AG04449 (cell line): ENCODE measurements at regions of chr17 and their contacts with region 1.

Region 1: GRCh38 chr17:82781894-82782274 is 30.0 kb downstream of the TBCD start:
- DNase-seq: no peak
- H3K4me3 ChIP-seq: no peak overlapping the region
- CTCF ChIP-seq: peak; percentile 99

Region 2: DNA sequence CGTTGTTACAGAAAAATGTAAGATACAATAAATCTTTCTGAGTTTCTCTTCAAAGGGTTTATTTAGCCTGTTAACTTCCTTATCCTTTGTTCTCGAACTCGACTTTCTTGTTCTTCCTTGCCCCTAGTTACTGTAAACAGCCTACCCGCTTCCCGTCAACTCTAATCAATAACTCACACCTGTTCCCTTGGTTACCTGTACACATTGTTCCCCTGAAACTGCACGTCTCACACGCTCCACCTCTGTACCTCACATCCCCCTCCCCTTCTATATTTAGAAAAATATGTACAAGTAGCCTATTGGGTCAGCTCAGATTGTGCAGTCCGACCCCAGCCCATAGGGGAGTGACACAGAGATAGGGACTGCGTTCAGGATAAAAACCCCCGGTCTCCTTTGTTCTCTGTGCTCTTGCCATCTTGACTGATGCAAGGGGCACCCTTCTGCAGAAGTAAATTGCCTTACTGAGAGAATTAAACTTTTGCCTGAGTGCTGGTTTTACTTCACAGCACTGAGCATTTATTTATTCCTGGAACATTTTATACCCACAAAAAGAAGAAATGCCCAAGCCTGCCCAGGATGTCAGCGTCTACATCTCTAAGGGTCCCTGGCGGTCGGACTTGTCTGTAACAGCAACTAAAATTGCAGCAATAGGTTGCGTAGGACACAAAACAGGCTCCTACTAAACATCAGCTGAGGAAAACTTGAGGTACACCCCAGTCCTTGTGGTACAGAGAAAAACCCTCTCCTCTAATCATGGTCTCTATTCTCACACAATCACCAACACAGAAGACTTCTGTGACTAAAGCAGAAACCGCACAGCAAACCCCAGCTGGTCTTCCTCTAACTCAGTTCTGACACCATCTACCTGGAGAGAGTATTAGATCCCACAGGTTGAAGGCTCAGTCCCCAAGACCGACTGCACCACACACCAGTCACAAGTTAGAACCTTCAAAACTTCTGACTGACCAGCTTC is 145.0 kb before region 1 on chr17:
- CTCF ChIA-PET with region 1: no interaction called
- POLR2A ChIA-PET with region 1: no interaction called
- DNase-seq: no peak
- H3K4me3 ChIP-seq: no peak overlapping the region
- CTCF ChIP-seq: no peak

Region 3: DNA sequence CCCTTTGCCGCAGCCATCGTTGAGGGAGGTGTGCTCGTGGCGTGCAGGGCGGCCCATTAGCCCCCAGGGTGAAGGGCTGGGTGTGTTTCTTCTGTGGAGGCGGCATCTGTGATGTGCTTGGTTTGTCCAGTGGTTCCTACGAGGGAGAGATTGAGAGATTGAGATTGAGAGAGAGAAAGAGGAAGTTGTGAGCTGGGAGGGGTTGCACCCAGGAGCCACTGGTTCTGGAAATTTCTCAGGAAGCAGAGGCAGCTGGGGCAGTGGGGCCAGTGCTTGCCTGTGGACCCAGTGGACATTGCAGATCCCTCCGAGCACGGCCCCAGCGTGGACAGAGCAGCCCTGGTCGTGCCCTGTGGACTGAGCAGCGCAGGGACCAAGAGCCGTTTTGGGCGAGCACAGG is 129.9 kb after region 1 on chr17:
- CTCF ChIA-PET with region 1: interaction called, 52 read pairs
- POLR2A ChIA-PET with region 1: no interaction called
- DNase-seq: no peak
- H3K4me3 ChIP-seq: no peak overlapping the region
- CTCF ChIP-seq: no peak

Region 4: GRCh38 chr17:83073444-83074063 is 291.7 kb after region 1 on chr17:
- CTCF ChIA-PET with region 1: no interaction called
- POLR2A ChIA-PET with region 1: no interaction called
- DNase-seq: no peak
- H3K4me3 ChIP-seq: no peak overlapping the region
- CTCF ChIP-seq: no peak